ENCODE measurements at regions of chr7 and their contacts with region 1.

Region 1: GRCh38 chr7:153188630-153189029 is 429.1 kb downstream of the ACTR3B start:
- DNase-seq: no peak
- ATAC-seq: no peak

Region 2: GRCh38 chr7:152411389-152411788 is 777.2 kb before region 1 on chr7:
- intact Hi-C with region 1: no loop called
- DNase-seq: no peak
- ATAC-seq: peak; percentile 29 to 31

Region 3: GRCh38 chr7:152894273-152895170 is 294.1 kb before region 1 on chr7:
- intact Hi-C with region 1: loop called in 1 of 2 experiments (anchors 10 kb)
- DNase-seq: no peak
- ATAC-seq: peak; percentile 61